Mammary epithelial cell (primary cell): ENCODE measurements at regions of chr19 and their contacts with region 1.

Region 1: DNA sequence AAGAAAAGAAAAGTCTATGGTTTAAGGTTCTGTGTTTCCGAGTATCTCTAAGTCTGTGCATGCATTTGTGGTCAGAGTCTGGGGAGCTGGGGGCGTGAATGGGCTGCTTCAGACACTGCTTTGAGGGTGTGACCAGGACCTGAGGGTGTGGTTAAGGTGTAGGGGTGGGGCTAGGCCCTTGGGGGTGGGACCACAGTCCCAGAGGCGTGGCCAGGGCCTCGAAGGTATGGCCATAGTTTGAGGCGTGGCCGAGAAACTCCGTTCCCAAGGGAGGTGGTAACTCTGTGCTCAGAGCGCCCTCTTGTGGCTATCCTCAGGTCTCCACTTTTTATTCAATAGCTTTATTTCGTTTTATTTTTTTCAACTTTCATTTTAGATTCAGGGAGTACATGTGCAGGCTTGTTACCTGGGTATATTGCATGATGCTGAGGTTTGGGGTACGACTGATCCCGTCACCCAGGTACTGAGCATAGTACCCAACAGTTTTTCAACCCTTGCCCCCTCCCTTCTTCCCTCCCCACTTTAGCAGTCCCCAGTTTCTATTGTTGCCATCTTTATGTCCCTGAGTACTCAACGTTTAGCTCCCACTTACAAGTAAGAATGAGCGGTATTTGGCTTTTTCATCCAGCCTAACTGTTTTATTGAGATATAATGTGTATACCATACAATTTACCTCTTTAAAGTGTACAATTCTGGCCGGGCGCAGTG is 7.0 kb upstream of the CBLC start:
- DNase-seq: peak; percentile 97
- H3K4me3 ChIP-seq: no peak overlapping the region
- H3K27ac ChIP-seq: peak overlapping the region; percentile 73
- H3K4me1 ChIP-seq: peaks cover 31% of the 10 kb centered on the region
- H3K27me3 ChIP-seq: no peaks in the 10 kb centered on the region
- CTCF ChIP-seq: peak; percentile 57 to 75

Region 2: DNA sequence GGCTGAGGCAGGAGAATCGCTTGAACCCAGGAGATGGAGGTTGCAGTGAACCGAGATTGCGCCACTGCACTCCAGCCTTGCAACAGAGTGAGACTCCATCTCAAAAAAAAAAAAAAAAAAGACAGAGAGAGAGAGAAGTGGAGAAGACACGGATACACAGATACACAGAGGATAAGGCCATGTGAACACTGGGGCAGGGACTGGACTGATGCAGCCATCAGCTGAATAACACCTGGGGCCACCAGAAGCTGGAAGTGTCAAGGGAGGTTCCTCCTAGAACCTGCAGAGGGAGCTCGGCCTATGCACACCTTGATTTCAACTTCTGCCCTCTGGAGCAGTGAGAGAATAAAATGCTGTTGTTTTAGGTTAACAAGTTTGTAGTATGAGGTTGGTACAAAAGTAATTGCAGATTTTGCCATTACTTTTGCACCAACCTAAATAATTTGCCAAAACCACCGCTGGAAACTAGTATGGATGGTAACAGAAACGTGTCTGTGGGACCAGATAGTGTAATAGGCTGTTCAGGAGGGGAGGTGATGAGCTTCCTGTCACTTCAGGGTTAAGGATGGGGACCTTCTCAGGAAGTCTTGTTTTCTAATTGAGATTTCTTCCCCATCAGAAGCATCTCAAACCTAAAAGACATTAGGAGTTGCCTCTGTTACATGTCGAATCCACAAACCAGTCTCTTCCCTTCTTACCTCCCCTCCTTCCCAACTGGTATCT is 193.7 kb before region 1 on chr19:
- CTCF ChIA-PET with region 1: no interaction called
- dilution Hi-C with region 1: no loop called
- in situ Hi-C with region 1: loop called in 1 of 2 experiments (anchors 25 kb)
- intact Hi-C with region 1: no loop called
- DNase-seq: peak; percentile 56
- H3K4me3 ChIP-seq: no peak overlapping the region
- H3K27ac ChIP-seq: no peak overlapping the region
- H3K4me1 ChIP-seq: no peaks in the 10 kb centered on the region
- H3K27me3 ChIP-seq: no peaks in the 10 kb centered on the region
- CTCF ChIP-seq: peak; percentile 79 to 84

Region 3: DNA sequence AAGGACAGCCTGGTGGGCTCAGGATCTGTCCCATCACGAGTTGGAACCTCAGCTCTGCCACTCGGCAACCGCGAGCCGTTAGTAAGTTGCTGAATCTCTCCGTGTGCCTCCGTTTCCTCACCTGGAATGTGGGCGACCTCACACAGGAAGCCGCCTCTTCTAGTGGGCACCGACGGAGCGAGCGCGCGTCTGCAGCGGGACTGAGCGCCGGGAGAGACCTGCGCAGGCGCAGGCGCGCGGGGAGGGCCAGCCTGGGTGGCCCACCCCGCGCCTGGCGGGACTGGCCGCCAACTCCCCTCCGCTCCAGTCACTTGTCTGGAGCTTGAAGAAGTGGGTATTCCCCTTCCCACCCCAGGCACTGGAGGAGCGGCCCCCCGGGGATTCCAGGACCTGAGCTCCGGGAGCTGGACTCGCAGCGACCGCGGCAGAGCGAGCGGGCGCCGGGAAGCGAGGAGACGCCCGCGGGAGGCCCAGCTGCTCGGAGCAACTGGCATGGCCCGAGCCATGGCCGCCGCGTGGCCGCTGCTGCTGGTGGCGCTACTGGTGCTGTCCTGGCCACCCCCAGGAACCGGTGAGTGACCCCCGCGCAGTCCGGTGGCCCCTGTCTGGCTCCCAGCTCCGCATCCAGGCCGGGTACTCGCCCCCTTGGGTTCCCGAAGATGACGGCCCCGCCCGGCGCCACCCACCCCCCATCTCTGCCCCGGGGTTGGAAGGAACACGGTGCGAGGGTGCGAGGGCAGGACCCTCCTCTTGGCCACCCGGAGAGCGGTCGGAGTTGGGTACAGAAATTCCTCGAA is 126.9 kb before region 1 on chr19 and contains the start of gene PVR:
- CTCF ChIA-PET with region 1: no interaction called
- dilution Hi-C with region 1: no loop called
- in situ Hi-C with region 1: no loop called
- intact Hi-C with region 1: loop called (anchors 5 kb)
- DNase-seq: peak; percentile 79
- H3K4me3 ChIP-seq: peak within 1 kb of the TSS; percentile 73 to 94 (median 81)
- H3K27ac ChIP-seq: peak within 1 kb of the TSS; percentile 75
- H3K4me1 ChIP-seq: peaks cover 7% of the 10 kb centered on the region
- H3K27me3 ChIP-seq: no peaks in the 10 kb centered on the region
- CTCF ChIP-seq: no peak
- total RNA-seq, gene PVR: 85.9 to 120 TPM

Region 4: DNA sequence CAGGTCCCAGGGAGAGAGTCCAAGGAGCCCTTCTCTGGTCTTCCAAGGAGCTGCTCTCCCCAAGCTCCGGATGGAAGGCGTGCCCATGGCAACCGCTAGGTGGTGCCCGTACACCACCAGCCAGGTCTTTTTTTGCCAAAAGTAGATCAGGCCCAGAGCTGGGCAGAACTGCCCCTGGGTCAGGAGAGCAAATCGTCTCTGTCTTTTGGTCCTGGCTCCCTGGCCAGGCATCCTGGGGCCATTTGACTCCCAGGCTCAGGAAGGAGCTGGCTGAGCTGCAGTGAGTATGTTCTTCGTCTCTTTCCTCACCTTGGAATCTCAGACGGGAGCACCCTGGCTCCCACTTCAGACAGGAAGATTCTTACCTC is 46.8 kb before region 1 on chr19:
- CTCF ChIA-PET with region 1: interaction called, 61 read pairs
- dilution Hi-C with region 1: no loop called
- in situ Hi-C with region 1: loop called (anchors 5 kb)
- intact Hi-C with region 1: loop called (anchors 1 kb)
- DNase-seq: peak; percentile 70
- H3K4me3 ChIP-seq: no peak overlapping the region
- H3K27ac ChIP-seq: no peak overlapping the region
- H3K4me1 ChIP-seq: peaks cover 11% of the 10 kb centered on the region
- H3K27me3 ChIP-seq: no peaks in the 10 kb centered on the region
- CTCF ChIP-seq: peak; percentile 97 to 99

Region 5: DNA sequence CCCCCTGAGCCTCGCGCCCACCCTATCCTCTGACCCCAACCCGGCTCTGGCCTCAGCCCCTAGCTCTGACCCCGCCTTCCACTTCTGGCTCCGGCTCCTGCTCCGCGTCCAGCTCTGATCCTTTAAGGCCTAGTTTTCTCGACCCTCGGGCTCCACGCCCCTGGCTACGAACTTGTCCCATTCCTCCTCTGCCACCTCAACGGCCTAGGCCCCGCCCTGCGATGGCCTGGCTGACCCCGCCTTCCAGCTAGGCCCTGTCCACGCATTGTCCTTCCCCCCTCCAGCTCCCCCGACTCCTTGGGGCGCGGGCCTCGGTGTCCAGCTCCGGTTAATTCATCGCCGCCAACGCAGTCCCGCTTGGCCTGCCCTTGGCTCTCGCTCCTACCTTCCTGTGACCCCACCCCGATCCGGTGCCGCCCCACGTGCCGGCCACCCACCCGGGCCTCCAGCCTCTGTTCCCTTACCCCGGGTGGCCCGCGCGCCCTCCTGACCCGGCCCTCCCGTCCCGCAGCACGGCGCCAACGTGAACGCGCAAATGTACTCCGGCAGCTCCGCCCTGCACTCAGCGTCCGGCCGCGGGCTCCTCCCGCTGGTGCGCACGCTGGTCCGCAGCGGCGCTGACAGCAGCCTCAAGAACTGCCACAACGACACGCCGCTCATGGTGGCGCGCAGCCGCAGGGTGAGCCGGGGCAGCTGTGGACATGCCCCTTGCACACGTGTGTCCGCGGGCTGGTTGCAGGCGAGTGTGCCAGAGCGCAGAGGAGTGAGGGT is 12.8 kb before region 1 on chr19:
- CTCF ChIA-PET with region 1: no interaction called
- dilution Hi-C with region 1: no loop called
- in situ Hi-C with region 1: no loop called
- intact Hi-C with region 1: no loop called
- DNase-seq: no peak
- H3K4me3 ChIP-seq: no peak overlapping the region
- H3K27ac ChIP-seq: no peak overlapping the region
- H3K4me1 ChIP-seq: peaks cover 22% of the 10 kb centered on the region
- H3K27me3 ChIP-seq: no peaks in the 10 kb centered on the region
- CTCF ChIP-seq: no peak

Region 6: GRCh38 chr19:44808463-44809371 is 38.0 kb after region 1 on chr19 and contains the start of gene BCAM:
- CTCF ChIA-PET with region 1: no interaction called
- dilution Hi-C with region 1: no loop called
- in situ Hi-C with region 1: no loop called
- intact Hi-C with region 1: loop called (anchors 2 kb)
- DNase-seq: peak; percentile 40
- H3K4me3 ChIP-seq: peak within 1 kb of the TSS; percentile 60 to 73 (median 73)
- H3K27ac ChIP-seq: peak within 1 kb of the TSS; percentile 50
- H3K4me1 ChIP-seq: peaks cover 40% of the 10 kb centered on the region
- H3K27me3 ChIP-seq: no peaks in the 10 kb centered on the region
- CTCF ChIP-seq: no peak
- total RNA-seq, gene BCAM: 114 to 120 TPM

Region 7: GRCh38 chr19:44883922-44884321 is 113.2 kb after region 1 on chr19:
- CTCF ChIA-PET with region 1: no interaction called
- dilution Hi-C with region 1: no loop called
- in situ Hi-C with region 1: no loop called
- intact Hi-C with region 1: no loop called
- DNase-seq: no peak
- H3K4me3 ChIP-seq: no peak overlapping the region
- H3K27ac ChIP-seq: no peak overlapping the region
- H3K4me1 ChIP-seq: no peaks in the 10 kb centered on the region
- H3K27me3 ChIP-seq: no peaks in the 10 kb centered on the region
- CTCF ChIP-seq: no peak